ENCODE measurements at regions of chr16 and their contacts with region 1.

Region 1: DNA sequence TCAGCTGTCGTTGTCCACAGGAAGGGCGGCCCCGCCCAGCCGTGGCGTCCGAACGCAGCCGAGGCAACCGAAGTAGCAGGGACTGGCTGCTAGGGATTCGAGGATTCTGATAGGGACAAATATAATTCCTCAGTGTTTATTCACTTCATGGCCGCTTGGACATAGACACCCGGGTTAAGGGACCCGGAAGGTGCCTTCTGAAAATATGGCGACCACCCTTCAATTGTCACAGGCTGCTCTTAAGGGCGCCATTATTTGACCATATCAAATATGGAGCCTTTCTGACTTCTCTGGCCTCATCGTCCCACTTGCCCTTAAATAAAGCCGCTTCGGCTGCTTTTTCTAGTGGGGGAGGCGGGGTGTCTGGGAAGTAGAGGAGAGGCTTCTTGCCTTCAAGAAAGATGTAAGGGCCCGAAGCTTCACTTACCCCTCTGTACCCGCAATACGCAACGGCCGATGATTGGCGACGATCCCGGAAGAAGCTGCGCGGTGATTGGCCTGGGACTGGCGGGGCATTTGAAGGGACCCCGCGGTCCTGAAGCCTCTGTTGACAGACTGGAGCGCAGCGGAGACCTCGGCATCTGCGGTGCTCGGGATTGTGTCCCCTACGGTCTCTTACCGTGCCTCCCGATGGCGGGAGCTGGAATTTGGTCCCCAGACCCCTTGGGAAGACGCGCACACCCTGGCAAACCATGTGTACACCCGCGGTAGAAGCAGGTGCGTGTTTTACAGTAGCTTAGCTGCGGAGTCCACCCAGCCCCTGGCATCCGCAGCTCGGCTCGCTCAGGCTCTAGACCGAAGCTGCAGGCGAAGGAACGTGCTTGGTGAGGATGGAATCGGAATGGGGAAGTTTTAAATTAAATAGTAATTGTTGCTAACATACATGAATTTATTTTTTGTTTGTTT is at the start of gene ZNF688:
- DNase-seq: peak; percentile 97
- ATAC-seq: peak; percentile 86
- H3K4me3 ChIP-seq: peak within 1 kb of the TSS; percentile 72 to 89 (median 86)
- H3K4me3 Mint-ChIP-seq: peak within 1 kb of the TSS; percentile 91
- H3K27ac ChIP-seq: peak within 1 kb of the TSS; percentile 96 to 97
- H3K27ac Mint-ChIP-seq: peak within 1 kb of the TSS; percentile 99
- H3K4me1 ChIP-seq: peaks cover 29 to 43% of the 10 kb centered on the region in 2 donors
- H3K4me1 Mint-ChIP-seq: peaks cover 40% of the 10 kb centered on the region
- H3K27me3 ChIP-seq: no peaks in the 10 kb centered on the region
- H3K27me3 Mint-ChIP-seq: no peaks in the 10 kb centered on the region
- CTCF ChIP-seq: no peak
- total RNA-seq, gene ZNF688: 23.1 and 24.9 TPM in 2 replicates

Region 2: DNA sequence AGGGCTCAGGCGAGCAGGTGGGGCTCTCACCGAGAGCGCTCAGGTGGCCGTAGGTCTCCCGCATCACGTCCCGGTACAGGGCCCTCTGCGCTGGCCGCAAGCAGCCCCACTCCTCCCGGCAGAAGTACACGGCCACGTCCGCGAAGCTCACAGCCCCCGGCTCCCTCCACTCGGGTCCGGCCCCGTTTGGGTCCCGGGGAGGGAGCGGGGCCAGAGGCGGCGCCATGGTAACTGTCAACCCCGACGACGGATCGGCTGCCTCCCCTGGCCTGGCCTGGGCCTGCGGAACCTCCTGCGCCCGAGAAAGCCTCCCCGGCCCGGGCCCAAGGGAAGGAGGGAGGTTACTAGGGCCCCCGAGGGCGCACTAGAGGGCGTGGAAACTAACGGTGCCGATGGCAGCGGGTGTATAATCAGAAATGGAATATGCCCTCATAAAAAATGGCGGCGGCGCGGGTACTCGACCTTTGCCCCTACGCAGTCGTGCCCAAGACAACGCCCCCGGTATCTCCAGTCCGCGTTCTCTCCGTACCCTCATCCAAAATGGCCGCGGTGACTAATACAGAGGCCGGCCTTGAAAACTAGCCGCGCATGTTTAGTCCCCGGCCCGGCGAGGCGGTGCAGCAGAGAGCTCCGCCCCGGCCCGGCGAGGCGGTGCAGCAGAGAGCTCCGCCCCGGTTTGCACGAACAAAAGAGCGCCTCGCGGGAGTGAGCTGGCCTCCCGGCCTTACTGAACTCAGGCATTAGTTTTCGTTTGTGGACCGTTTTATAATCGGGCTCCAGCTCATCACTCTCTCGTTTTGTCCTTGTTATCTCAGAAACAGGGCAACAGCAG is 13.8 kb before region 1 on chr16 and contains the start of gene ZNF764:
- CTCF ChIA-PET with region 1: interaction called, 21 read pairs
- POLR2A ChIA-PET with region 1: interaction called, 81 read pairs
- intact Hi-C with region 1: loop called (anchors 1 kb)
- DNase-seq: peak; percentile 97
- ATAC-seq: peak; percentile 92
- H3K4me3 ChIP-seq: peak within 1 kb of the TSS in 4 of 5 experiments; percentile 80 to 91 (median 88)
- H3K4me3 Mint-ChIP-seq: peak within 1 kb of the TSS; percentile 86
- H3K27ac ChIP-seq: peak within 1 kb of the TSS; percentile 95 to 97
- H3K27ac Mint-ChIP-seq: peak within 1 kb of the TSS; percentile 91
- H3K4me1 ChIP-seq: peaks cover 14 to 35% of the 10 kb centered on the region in 2 donors
- H3K4me1 Mint-ChIP-seq: peaks cover 42% of the 10 kb centered on the region
- H3K27me3 ChIP-seq: no peaks in the 10 kb centered on the region
- H3K27me3 Mint-ChIP-seq: no peaks in the 10 kb centered on the region
- CTCF ChIP-seq: no peak
- total RNA-seq, gene ZNF764: 19.7 and 20.9 TPM in 2 replicates

Region 3: GRCh38 chr16:30602616-30603277 is 30.8 kb after region 1 on chr16:
- CTCF ChIA-PET with region 1: interaction called, 11 read pairs
- POLR2A ChIA-PET with region 1: no interaction called
- intact Hi-C with region 1: no loop called
- DNase-seq: no peak
- ATAC-seq: no peak
- H3K4me3 ChIP-seq: no peak overlapping the region
- H3K4me3 Mint-ChIP-seq: no peak overlapping the region
- H3K27ac ChIP-seq: no peak overlapping the region
- H3K27ac Mint-ChIP-seq: no peak overlapping the region
- H3K4me1 ChIP-seq: no peaks in the 10 kb centered on the region
- H3K4me1 Mint-ChIP-seq: peaks cover 3% of the 10 kb centered on the region
- H3K27me3 ChIP-seq: no peaks in the 10 kb centered on the region
- H3K27me3 Mint-ChIP-seq: no peaks in the 10 kb centered on the region
- CTCF ChIP-seq: no peak

Region 4: DNA sequence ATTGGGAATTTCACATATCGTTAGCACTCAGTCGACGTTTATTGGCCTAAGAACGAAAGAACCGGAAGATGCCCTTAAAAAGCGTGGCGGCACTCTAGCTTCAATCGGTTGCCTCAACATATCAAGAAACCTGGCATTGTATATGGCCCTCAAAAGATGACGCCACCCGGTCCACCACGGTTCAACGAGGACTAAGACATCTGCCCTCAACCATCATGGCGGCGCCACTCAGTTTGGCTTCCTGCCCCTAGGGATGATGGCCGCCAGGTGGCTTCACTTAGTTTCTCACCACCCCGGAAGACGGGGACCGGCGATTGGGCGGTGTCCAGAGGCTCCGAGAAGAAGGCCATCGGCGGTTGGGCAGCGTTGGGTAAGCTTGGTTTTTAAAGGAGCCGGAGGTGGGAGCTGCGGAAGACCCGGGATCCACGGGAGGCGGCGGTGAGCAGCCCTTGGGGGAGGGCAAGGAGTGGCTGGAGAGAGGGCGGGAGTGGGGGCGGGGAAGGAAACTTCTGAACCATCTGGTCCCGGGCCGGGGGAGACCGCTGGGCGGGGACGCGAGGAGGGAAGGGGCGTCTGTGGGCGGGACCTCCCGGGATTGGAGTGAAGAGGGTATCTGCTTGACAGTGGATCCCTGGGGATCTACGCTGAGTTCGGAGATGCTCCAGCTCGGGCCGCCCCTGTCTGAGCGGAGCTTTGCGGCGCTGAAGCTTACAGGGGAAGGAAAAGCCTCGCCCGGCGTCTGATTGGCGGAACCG is 78.6 kb after region 1 on chr16 and contains the start of gene PRR14:
- CTCF ChIA-PET with region 1: interaction called, 3 read pairs
- POLR2A ChIA-PET with region 1: interaction called, 15 read pairs
- intact Hi-C with region 1: loop called (anchors 1 kb)
- DNase-seq: peak; percentile 99
- ATAC-seq: peak; percentile 76
- H3K4me3 ChIP-seq: peak within 1 kb of the TSS; percentile 62 to 100 (median 93)
- H3K4me3 Mint-ChIP-seq: peak within 1 kb of the TSS; percentile 91
- H3K27ac ChIP-seq: peak within 1 kb of the TSS; percentile 97 to 98
- H3K27ac Mint-ChIP-seq: peak within 1 kb of the TSS; percentile 96
- H3K4me1 ChIP-seq: peaks cover 9 to 21% of the 10 kb centered on the region in 2 donors
- H3K4me1 Mint-ChIP-seq: peaks cover 19% of the 10 kb centered on the region
- H3K27me3 ChIP-seq: no peaks in the 10 kb centered on the region
- H3K27me3 Mint-ChIP-seq: no peaks in the 10 kb centered on the region
- CTCF ChIP-seq: no peak
- total RNA-seq, gene PRR14: 92.7 and 95.8 TPM in 2 replicates